Activated naive CD4-positive, alpha-beta T cell treated with anti-CD3 and anti-CD28 coated beads for 36 hours (primary cell): ENCODE measurements at regions of chr4 and their contacts with region 1.

Region 1: GRCh38 chr4:147518846-147519767 is 38.2 kb downstream of the EDNRA start:
- DNase-seq: peak; percentile 72
- H3K4me3 Mint-ChIP-seq: no peak overlapping the region
- H3K27ac Mint-ChIP-seq: no peak overlapping the region
- H3K4me1 Mint-ChIP-seq: no peaks in the 10 kb centered on the region
- H3K27me3 Mint-ChIP-seq: no peaks in the 10 kb centered on the region

Region 2: GRCh38 chr4:147019061-147019460 is 500.0 kb before region 1 on chr4:
- CTCF ChIA-PET with region 1: no interaction called
- intact Hi-C with region 1: loop called (anchors 10 kb)
- DNase-seq: peak; percentile 77
- H3K4me3 Mint-ChIP-seq: no peak overlapping the region
- H3K27ac Mint-ChIP-seq: no peak overlapping the region
- H3K4me1 Mint-ChIP-seq: no peaks in the 10 kb centered on the region
- H3K27me3 Mint-ChIP-seq: peaks cover 11% of the 10 kb centered on the region

Region 3: GRCh38 chr4:147160908-147161513 is 358.1 kb before region 1 on chr4:
- CTCF ChIA-PET with region 1: no interaction called
- intact Hi-C with region 1: loop called (anchors 2 kb)
- DNase-seq: peak; percentile 18
- H3K4me3 Mint-ChIP-seq: no peak overlapping the region
- H3K27ac Mint-ChIP-seq: no peak overlapping the region
- H3K4me1 Mint-ChIP-seq: peaks cover 2% of the 10 kb centered on the region
- H3K27me3 Mint-ChIP-seq: peaks cover 35% of the 10 kb centered on the region

Region 4: GRCh38 chr4:147590249-147590920 is 71.3 kb after region 1 on chr4:
- CTCF ChIA-PET with region 1: interaction called, 22 read pairs
- intact Hi-C with region 1: loop called (anchors 1 kb)
- DNase-seq: peak; percentile 64
- H3K4me3 Mint-ChIP-seq: no peak overlapping the region
- H3K27ac Mint-ChIP-seq: no peak overlapping the region
- H3K4me1 Mint-ChIP-seq: peaks cover 2% of the 10 kb centered on the region
- H3K27me3 Mint-ChIP-seq: no peaks in the 10 kb centered on the region

Region 5: DNA sequence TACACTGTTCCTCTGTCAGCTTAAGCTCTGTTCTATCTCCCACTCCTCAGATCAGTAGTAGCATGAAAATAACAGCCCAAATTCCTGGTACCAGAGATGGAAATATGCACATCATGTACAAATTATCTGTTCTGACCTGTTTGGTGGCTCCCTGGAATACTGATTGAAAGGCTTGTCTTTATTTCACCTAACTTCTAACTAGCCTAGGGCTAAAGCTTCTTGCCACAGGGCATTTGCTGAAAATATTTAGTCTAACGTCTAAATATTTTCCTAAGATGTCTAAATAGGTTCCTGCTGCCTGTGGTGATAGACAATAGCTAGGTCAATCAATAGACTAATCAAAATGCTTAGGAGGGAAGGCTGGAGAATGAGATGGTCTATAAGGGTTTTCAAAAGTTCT is 177.8 kb after region 1 on chr4:
- CTCF ChIA-PET with region 1: no interaction called
- intact Hi-C with region 1: no loop called
- DNase-seq: no peak
- H3K4me3 Mint-ChIP-seq: no peak overlapping the region
- H3K27ac Mint-ChIP-seq: no peak overlapping the region
- H3K4me1 Mint-ChIP-seq: no peaks in the 10 kb centered on the region
- H3K27me3 Mint-ChIP-seq: peaks cover 3% of the 10 kb centered on the region

Region 6: GRCh38 chr4:147707865-147708672 is 189.0 kb after region 1 on chr4:
- CTCF ChIA-PET with region 1: interaction called, 3 read pairs
- intact Hi-C with region 1: loop called (anchors 1 kb)
- DNase-seq: peak; percentile 70
- H3K4me3 Mint-ChIP-seq: no peak overlapping the region
- H3K27ac Mint-ChIP-seq: no peak overlapping the region
- H3K4me1 Mint-ChIP-seq: no peaks in the 10 kb centered on the region
- H3K27me3 Mint-ChIP-seq: no peaks in the 10 kb centered on the region